Heart left ventricle (tissue), 16 donors: ENCODE measurements at regions of chr4 and their contacts with region 1.

Region 1: GRCh38 chr4:168475745-168476144 is 4.5 kb downstream of the DDX60L start:
- DNase-seq: no peak
- ATAC-seq: no peak
- H3K4me3 ChIP-seq: no peak overlapping the region
- H3K27ac ChIP-seq: no peak overlapping the region
- H3K4me1 ChIP-seq: peaks cover 0 to 47% (median 13%) of the 10 kb centered on the region in 12 donors
- H3K27me3 ChIP-seq: no peaks in the 10 kb centered on the region
- CTCF ChIP-seq: no peak
- POLR2A ChIP-seq: no peak

Region 2: GRCh38 chr4:168318266-168318895 is 157.4 kb before region 1 on chr4 and contains the start of gene DDX60:
- intact Hi-C with region 1: loop called in 5 of 10 experiments (anchors 2 to 10 kb)
- DNase-seq: peak; percentile 79 to 84 (median 84)
- ATAC-seq: peak; percentile 85 to 96 (median 95)
- H3K4me3 ChIP-seq: peak within 1 kb of the TSS; percentile 62 to 91 (median 78)
- H3K27ac ChIP-seq: peak within 1 kb of the TSS; percentile 91 to 99 (median 97)
- H3K4me1 ChIP-seq: peaks cover 0 to 24% (median 11%) of the 10 kb centered on the region in 12 donors
- H3K27me3 ChIP-seq: no peaks in the 10 kb centered on the region
- CTCF ChIP-seq: peak; percentile 41 to 71 (median 56)
- POLR2A ChIP-seq: peak in 1 of 2 donors; percentile 21
- total RNA-seq, gene DDX60: 3.8 to 27.2 (median 10.6) TPM

Region 3: DNA sequence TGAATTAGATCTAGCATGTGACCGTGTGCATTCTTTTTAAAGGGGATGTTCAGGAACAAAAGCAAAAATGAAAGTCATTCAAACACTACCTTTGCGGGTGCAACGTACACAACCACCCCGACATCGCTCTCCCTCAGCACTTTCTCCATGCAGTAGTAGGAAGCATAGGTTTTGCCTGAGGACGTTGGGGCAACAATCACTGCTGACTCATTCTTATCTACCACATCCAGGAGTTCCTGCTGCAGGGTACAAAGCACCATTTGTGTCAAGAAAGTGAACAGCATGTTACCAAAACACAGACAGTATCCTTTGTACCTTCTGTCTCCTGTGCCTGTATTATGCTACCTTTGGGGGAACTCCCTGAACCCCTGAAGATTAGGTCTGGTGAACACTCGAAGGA is 54.1 kb before region 1 on chr4:
- intact Hi-C with region 1: loop called in 2 of 10 experiments (anchors 5 to 10 kb)
- DNase-seq: no peak
- ATAC-seq: peak in 3 of 4 donors; percentile 41 to 79 (median 51)
- H3K4me3 ChIP-seq: no peak overlapping the region
- H3K27ac ChIP-seq: no peak overlapping the region
- H3K4me1 ChIP-seq: peaks cover 0 to 2% (median 0%) of the 10 kb centered on the region in 12 donors
- H3K27me3 ChIP-seq: no peaks in the 10 kb centered on the region
- CTCF ChIP-seq: no peak
- POLR2A ChIP-seq: no peak

Region 4: DNA sequence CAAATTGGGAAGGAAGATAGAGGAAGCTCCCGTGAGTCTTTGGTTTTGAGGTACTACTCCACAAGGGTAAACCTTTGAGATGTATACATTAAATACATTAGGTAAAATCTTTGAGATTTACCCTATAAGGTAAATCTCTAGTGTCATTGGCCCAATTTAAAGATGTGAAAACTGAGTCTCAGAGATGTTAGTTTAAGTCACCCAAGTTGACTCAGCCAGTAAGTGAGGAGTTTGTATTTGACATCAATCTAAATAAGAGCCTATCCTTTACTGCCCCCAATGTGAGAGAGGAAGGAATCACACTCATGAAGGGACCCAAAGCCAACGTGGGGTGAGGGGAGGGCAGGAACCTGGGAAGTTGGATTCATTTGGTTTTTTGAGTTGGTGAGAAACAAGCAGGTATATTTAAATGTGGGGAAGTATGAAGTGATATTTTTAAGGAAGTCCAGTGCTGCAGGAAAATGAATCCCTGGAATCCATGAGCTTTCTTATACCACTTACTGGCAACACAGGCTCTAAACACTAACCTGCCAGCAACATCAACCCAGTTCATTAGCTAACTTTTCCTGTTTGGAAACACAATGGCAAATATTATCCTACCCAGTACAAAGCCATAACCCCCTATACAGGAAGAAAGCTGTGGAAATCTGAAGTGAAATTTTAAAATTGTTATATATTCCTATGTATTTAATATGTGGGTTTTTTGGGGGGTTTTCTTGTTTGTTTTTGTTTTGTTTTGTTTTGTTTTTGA is 76.4 kb after region 1 on chr4:
- intact Hi-C with region 1: no loop called
- DNase-seq: no peak
- ATAC-seq: peak in 2 of 4 donors; percentile 33 to 56
- H3K4me3 ChIP-seq: no peak overlapping the region
- H3K27ac ChIP-seq: no peak overlapping the region
- H3K4me1 ChIP-seq: peaks cover 0 to 18% (median 8%) of the 10 kb centered on the region in 12 donors
- H3K27me3 ChIP-seq: no peaks in the 10 kb centered on the region
- CTCF ChIP-seq: peak in 2 of 12 donors; percentile 9 to 12
- POLR2A ChIP-seq: no peak